ENCODE measurements at regions of chr14 and their contacts with region 1.

Region 1: DNA sequence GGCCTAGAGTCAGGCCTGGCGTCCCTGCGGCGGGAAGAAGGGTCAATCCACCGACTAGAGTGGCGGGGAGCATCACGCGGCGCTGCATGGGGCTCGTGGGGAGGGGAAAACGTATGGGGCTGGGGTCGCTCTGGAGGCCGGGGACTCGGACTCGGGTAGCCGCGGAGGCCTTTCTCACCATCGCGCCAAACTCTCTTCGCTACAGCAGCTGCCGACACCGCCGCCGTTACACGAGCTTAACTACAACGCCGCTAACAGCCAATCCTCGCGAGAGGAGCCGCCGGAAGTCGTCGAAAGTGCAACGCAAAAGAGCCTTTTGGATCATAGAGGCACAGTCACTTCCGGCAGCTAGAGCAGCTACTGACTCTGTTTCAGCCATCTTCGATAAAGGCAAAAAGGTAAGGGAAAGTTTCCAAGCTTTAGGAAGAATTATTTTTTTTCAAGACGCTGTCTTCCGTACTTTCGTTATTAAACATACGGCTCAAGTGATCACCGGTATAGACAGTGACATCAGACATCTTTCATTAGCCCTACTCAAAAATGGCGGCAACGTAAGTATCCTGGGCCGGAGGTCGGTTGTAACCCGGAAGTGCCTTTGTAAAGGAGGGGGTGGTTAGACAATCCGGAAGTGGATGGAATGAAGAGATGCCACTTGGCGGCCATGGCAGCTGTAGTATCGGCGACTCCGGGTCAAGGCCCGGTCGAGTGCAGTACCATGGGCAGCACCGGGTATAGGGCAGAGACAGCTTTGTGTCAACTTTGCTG is at the starts of genes ERH and SLC39A9:
- DNase-seq: peak; percentile 97
- ATAC-seq: peak; percentile 86
- H3K4me3 Mint-ChIP-seq: peak within 1 kb of the TSS; percentile 86
- H3K27ac Mint-ChIP-seq: peak within 1 kb of the TSS; percentile 99
- H3K4me1 Mint-ChIP-seq: peaks cover 60% of the 10 kb centered on the region
- H3K27me3 Mint-ChIP-seq: no peaks in the 10 kb centered on the region
- total RNA-seq, gene ERH: 291 to 348 TPM
- total RNA-seq, gene SLC39A9: 40.7 to 50.5 TPM

Region 2: GRCh38 chr14:69059658-69060623 is 338.3 kb before region 1 on chr14:
- CTCF ChIA-PET with region 1: no interaction called
- DNase-seq: no peak
- ATAC-seq: no peak
- H3K4me3 Mint-ChIP-seq: no peak overlapping the region
- H3K27ac Mint-ChIP-seq: no peak overlapping the region
- H3K4me1 Mint-ChIP-seq: peaks cover 23% of the 10 kb centered on the region
- H3K27me3 Mint-ChIP-seq: no peaks in the 10 kb centered on the region

Region 3: GRCh38 chr14:69366069-69366468 is 32.2 kb before region 1 on chr14:
- CTCF ChIA-PET with region 1: no interaction called
- DNase-seq: no peak
- ATAC-seq: no peak
- H3K4me3 Mint-ChIP-seq: no peak overlapping the region
- H3K27ac Mint-ChIP-seq: no peak overlapping the region
- H3K4me1 Mint-ChIP-seq: no peaks in the 10 kb centered on the region
- H3K27me3 Mint-ChIP-seq: no peaks in the 10 kb centered on the region

Region 4: DNA sequence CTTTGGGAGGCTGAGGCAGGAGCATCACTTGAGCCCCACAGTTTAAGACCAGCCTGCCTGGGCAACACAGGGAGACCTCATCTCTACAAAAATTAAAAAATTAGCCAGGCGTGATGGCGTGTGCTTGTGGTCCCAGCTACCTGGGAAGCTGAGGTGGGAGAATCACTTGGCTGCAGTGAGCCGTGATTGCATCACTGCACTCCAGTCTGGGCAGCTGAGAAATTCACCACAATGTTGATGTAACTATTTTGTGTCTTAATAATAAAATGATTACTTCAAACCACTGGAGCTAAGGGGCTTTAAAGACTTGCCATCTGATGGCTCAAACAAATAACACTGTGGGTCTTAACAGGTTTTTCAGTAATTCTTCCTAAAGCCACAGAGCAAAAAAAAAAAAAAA is 10.9 kb before region 1 on chr14:
- CTCF ChIA-PET with region 1: interaction called, 10 read pairs
- DNase-seq: no peak
- ATAC-seq: no peak
- H3K4me3 Mint-ChIP-seq: no peak overlapping the region
- H3K27ac Mint-ChIP-seq: no peak overlapping the region
- H3K4me1 Mint-ChIP-seq: peaks cover 45% of the 10 kb centered on the region
- H3K27me3 Mint-ChIP-seq: no peaks in the 10 kb centered on the region

Measured in activated CD8-positive, alpha-beta memory T cell treated with anti-CD3 and anti-CD28 coated beads, Interleukin-2, amount 10 ng/mL, durations not matched to agents 7 days and 5 days (primary cell).